Cardiac septum (tissue), 1 donor: ENCODE measurements at regions of chr19 and their contacts with region 1.

Region 1: GRCh38 chr19:41426952-41427646 is at the start of gene B3GNT8:
- DNase-seq: peak; percentile 96
- total RNA-seq, gene B3GNT8: 3.9 TPM

Region 2: DNA sequence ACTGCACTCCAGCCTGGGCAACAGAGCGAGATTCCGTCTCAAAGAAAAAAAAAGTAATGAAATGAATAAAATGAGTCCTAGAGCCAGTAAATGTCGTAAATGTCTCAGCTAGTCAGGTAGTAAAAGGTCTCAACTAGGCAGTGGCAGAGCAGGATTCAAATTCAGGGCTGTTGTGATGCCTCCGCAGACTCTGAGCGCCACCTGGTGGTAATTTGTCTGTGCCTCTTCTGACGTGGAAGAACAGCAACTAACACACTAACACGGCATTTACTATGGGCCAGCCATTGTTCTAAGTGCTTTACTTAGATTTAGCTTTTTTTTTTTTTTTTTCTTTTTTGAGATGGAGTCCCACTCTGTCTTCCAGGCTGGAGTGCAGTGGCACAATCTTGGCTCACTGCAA is 282.7 kb before region 1 on chr19:
- intact Hi-C with region 1: no loop called
- DNase-seq: peak; percentile 81

Region 3: DNA sequence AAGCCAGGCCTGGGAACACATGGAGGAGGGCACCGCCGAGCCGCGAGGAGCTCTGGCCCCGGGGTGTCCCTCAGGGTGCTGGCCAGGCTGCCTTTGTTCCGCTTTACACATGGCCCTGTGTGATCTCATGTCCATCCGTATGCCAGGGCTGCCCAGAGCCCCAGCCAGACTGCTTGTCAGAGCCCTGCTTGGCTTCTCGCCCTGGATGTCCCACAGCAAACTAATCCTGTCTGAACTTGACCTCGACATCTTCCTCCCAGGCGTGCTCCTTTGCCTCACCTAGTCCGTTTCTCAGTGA is 15.2 kb before region 1 on chr19:
- intact Hi-C with region 1: loop called (anchors 2 kb)
- DNase-seq: peak; percentile 87